ENCODE measurements at regions of chr2 and their contacts with region 1.

Region 1: DNA sequence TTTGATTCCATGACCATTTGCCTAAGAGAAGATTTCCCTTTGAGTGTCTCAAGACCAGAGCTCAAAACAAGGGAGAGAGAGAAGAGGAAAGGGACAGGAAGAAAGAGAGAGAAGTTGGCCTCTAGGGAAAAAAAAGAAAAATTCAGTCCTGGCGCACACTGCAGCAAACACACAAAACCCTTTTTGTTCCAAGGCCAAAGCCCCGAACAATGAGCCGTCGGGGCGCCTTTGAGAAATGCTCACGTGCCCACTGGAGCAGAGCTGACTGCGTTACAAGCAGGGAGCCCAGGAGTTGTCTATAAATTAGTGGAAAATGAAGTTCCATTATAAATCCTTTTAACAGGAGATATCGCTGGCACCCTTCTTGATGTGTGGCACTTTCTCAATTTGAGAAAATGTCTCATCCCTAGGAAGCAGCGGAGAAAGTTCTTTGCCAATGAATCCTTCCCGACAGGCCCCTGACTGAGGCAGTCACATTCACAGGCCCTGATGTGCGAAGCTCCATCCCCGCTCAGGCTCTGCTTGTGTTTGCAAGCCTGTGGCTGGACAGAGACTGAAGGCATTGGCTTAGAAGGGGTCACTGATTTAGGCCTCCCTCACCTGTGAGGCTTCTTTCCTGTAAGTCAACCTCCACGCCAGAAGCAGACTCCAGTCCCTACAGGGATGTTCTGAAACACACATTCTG is 32.1 kb upstream of the NCKAP5 start:
- DNase-seq: peak; percentile 24 to 86 (median 76)
- H3K4me3 ChIP-seq: peak overlapping the region in 4 of 59 donors; percentile 4 to 26 (median 7)
- H3K27ac ChIP-seq: peak overlapping the region; percentile 5 to 94 (median 83)
- H3K27me3 ChIP-seq: no peaks in the 10 kb centered on the region
- CTCF ChIP-seq: peak in 19 of 56 donors; percentile 8 to 62 (median 24)

Region 2: DNA sequence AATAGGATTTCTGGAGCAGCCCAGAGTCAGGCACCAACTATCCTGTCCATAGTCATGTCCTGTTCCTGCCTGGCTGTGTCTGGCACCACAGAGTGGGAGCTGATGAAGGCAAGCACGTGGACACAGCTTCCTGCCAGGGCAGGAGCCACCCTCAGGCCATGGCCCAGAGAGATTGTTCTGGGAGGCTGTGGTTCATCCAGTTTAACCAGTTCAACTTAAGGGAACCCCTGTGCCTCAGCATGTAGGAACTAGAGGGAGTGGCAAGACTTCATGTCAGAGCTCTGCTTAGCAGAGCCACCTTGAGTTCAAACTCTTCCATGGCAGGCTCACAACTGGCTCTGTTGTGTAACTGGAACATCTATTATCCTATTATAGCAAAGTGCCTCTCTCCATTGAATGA is 41.1 kb after region 1 on chr2:
- intact Hi-C with region 1: loop called in 1 of 2 experiments (anchors 2 kb)
- DNase-seq: peak in 9 of 10 donors; percentile 39 to 77 (median 74)
- H3K4me3 ChIP-seq: peak overlapping the region in 53 of 59 donors; percentile 3 to 65 (median 41)
- H3K27ac ChIP-seq: peak overlapping the region; percentile 61 to 96 (median 87)
- H3K27me3 ChIP-seq: no peaks in the 10 kb centered on the region
- CTCF ChIP-seq: peak in 45 of 56 donors; percentile 7 to 59 (median 34)

Measured in dorsolateral prefrontal cortex (tissue), 120 donors.